ENCODE measurements at regions of chr6 and their contacts with region 1.

Region 1: GRCh38 chr6:24666641-24667377 is at the starts of genes ACOT13 and TDP2:
- DNase-seq: peak; percentile 97 to 100 (median 98)
- ATAC-seq: peak; percentile 91
- H3K4me3 ChIP-seq: peak within 1 kb of the TSS; percentile 63
- H3K27ac ChIP-seq: peak within 1 kb of the TSS; percentile 91
- H3K4me1 ChIP-seq: peaks cover 8 to 12% of the 10 kb centered on the region in 2 experiments; a peak in 4 of 5 replicates
- H3K27me3 ChIP-seq: no peaks in the 10 kb centered on the region
- CTCF ChIP-seq: peak; percentile 71 to 82 (median 79)
- EP300 ChIP-seq: peak; percentile 37
- POLR2A ChIP-seq: peak; percentile 94
- RAD21 ChIP-seq: peak; percentile 53 to 56; a peak in 3 of 4 replicates
- polyA plus RNA-seq, gene ACOT13: 106 to 127 TPM
- polyA plus RNA-seq, gene TDP2: 27.7 to 28.7 TPM

Region 2: GRCh38 chr6:24621626-24622289 is 45.1 kb before region 1 on chr6:
- CTCF ChIA-PET with region 1: no interaction called
- POLR2A ChIA-PET with region 1: interaction called, 10 read pairs
- in situ Hi-C with region 1: no loop called
- intact Hi-C with region 1: no loop called
- DNase-seq: no peak
- ATAC-seq: peak; percentile 64
- H3K4me3 ChIP-seq: no peak overlapping the region
- H3K27ac ChIP-seq: no peak overlapping the region
- H3K4me1 ChIP-seq: no peaks in the 10 kb centered on the region
- H3K27me3 ChIP-seq: peaks cover 19 to 23% of the 10 kb centered on the region in 2 experiments; a peak in 4 of 5 replicates
- CTCF ChIP-seq: no peak
- EP300 ChIP-seq: no peak
- POLR2A ChIP-seq: no peak
- RAD21 ChIP-seq: no peak

Region 3: DNA sequence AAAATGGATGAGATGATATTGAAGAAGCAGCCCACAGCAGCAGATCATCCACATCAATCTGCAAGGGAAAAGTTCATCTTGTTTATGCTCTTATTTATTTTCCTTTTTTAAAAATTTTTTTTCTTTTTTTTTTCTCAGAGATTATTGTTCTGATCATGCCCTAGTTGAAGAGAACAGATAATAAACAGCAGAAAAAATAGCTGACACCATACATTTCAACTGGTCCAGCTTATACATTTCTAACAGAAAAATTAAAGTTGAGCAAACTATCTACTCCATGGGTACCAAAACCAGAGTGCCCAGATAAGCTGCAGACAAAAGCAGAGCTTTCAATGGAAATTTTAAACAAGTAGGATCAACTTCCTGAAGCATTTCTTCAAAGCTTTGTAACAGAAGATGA is 30.1 kb before region 1 on chr6:
- CTCF ChIA-PET with region 1: no interaction called
- POLR2A ChIA-PET with region 1: interaction called, 10 read pairs
- in situ Hi-C with region 1: no loop called
- intact Hi-C with region 1: no loop called
- DNase-seq: no peak
- ATAC-seq: no peak
- H3K4me3 ChIP-seq: no peak overlapping the region
- H3K27ac ChIP-seq: no peak overlapping the region
- H3K4me1 ChIP-seq: no peaks in the 10 kb centered on the region
- H3K27me3 ChIP-seq: peaks cover 0 to 4% of the 10 kb centered on the region in 2 experiments; a peak in 3 of 5 replicates
- CTCF ChIP-seq: no peak
- EP300 ChIP-seq: no peak
- POLR2A ChIP-seq: no peak
- RAD21 ChIP-seq: no peak

Region 4: DNA sequence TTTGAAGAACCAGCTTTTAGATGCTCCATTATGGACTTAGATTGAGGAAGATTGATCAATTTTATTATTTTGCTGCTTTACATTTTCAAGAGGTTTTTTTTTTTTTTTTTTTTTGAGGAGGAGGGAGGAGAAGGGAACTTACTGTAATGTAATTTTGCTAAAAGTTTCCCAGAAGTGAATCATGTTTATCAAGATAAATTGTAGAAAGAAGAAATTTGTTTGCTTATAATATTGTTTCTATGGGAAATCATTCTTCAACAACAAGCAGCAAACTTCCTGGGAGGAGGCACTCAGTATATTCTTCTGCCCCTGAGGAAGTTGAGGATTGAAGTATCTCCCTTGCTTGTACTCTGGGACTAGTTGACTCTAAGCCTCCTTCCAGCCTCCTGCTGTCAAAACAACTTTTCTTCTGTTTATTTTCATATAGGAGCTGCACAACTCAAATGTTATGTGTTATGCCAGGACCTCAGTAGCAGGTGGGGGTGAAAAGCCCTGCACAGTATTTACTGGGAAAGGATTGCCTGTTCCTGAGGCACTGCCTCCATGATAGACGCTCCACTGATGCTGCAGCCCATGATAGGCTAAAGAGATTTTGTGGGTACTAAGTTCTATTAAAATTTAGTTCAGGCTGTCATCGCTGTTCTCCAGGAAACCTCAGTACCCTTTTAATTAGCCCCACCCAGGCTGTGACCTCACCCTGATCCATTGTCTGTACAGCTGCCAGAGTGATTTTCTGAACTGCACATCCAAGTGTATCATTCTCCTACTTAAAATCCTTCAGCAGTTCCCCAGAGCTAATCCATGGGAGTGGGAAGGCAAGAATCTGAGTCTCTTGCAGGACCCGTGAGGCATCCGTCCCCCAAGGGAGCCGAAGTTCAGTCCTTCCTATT is 664.2 kb after region 1 on chr6:
- CTCF ChIA-PET with region 1: no interaction called
- POLR2A ChIA-PET with region 1: no interaction called
- in situ Hi-C with region 1: no loop called
- intact Hi-C with region 1: no loop called
- DNase-seq: no peak
- ATAC-seq: no peak
- H3K4me3 ChIP-seq: no peak overlapping the region
- H3K27ac ChIP-seq: no peak overlapping the region
- H3K4me1 ChIP-seq: no peaks in the 10 kb centered on the region
- H3K27me3 ChIP-seq: no peaks in the 10 kb centered on the region
- CTCF ChIP-seq: no peak
- EP300 ChIP-seq: no peak
- POLR2A ChIP-seq: no peak
- RAD21 ChIP-seq: no peak